Mammary epithelial cell (primary cell): ENCODE measurements at regions of chr12 and their contacts with region 1.

Region 1: DNA sequence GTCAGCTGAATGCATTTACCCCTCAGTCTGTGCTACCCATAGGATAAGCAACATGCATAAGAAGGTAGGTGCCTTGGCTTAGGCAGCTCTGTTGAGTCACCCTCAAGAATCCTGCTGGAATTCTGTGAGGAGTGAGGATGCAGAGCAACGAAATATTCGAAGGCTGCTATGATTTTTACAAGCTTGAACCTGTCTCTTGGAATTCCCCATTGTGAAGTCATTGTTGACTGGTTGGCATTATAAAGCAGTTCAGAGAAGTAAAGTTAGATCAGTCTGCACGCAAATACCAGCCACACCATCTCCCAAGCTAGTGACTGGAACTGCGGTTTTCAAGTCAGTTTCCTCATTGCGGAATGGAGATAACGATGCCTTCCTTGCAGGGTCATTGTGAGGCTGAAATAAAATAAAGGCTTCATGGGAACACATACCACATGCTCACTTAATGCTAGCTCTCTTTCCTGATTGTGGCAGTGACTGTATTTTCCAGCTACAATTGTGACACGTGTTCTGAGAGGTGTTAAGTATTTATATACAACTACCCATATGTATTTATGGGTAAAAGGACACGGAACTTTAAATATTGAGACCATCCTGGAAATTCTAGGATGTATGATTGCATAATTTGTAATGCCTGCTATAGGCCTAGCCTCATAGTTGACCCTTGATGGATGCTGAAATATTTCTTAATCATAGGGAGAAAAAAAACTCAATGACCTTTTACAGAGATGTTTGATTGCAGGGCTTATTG is 96.7 kb downstream of the ETV6 start:
- DNase-seq: peak; percentile 99
- H3K4me3 ChIP-seq: no peak overlapping the region
- H3K27ac ChIP-seq: peak overlapping the region; percentile 89
- H3K4me1 ChIP-seq: peaks cover 62% of the 10 kb centered on the region
- H3K27me3 ChIP-seq: no peaks in the 10 kb centered on the region
- CTCF ChIP-seq: no peak

Region 2: GRCh38 chr12:11595080-11595479 is 151.1 kb before region 1 on chr12:
- CTCF ChIA-PET with region 1: no interaction called
- dilution Hi-C with region 1: no loop called
- in situ Hi-C with region 1: no loop called
- intact Hi-C with region 1: no loop called
- DNase-seq: no peak
- H3K4me3 ChIP-seq: no peak overlapping the region
- H3K27ac ChIP-seq: no peak overlapping the region
- H3K4me1 ChIP-seq: no peaks in the 10 kb centered on the region
- H3K27me3 ChIP-seq: no peaks in the 10 kb centered on the region
- CTCF ChIP-seq: no peak

Region 3: DNA sequence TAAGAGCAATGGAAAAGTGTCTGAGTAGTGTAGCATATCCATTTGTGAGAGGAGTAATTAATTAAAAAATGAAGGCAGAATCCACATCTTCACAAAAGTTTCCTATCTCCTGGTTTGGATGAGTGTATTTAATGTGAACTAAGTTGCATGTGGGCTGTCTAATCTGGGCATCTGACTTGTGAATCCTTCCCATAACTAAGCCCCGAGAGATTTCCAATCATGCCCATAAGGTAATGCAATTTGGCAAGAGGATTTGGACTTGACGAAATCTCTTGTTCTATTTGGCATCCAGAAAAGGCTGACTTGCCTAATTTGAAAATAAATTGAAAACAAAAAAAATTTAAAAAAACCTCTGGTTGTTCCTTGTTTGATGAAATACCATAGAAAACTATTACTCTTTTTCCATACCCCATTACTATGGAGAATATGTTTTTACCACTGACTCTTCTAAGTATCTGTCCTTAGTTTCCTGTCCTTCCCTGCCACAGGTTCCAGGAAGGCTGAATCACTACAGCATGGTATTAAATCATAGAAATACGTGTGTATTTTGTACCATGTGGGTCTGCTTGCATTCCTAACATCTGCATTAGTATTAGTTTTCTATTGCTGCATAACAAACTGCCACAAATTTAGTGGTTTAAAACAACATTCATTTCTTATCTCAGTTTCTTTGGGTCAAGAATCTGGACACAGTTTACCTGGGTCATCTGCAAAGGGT is 48.4 kb before region 1 on chr12:
- CTCF ChIA-PET with region 1: no interaction called
- dilution Hi-C with region 1: no loop called
- in situ Hi-C with region 1: no loop called
- intact Hi-C with region 1: loop called (anchors 1 kb)
- DNase-seq: peak; percentile 75
- H3K4me3 ChIP-seq: no peak overlapping the region
- H3K27ac ChIP-seq: peak overlapping the region; percentile 55
- H3K4me1 ChIP-seq: peaks cover 19% of the 10 kb centered on the region
- H3K27me3 ChIP-seq: no peaks in the 10 kb centered on the region
- CTCF ChIP-seq: no peak

Region 4: GRCh38 chr12:11785712-11786111 is 39.5 kb after region 1 on chr12:
- CTCF ChIA-PET with region 1: no interaction called
- dilution Hi-C with region 1: no loop called
- in situ Hi-C with region 1: no loop called
- intact Hi-C with region 1: loop called (anchors 5 kb)
- DNase-seq: peak; percentile 87
- H3K4me3 ChIP-seq: no peak overlapping the region
- H3K27ac ChIP-seq: no peak overlapping the region
- H3K4me1 ChIP-seq: peaks cover 13% of the 10 kb centered on the region
- H3K27me3 ChIP-seq: no peaks in the 10 kb centered on the region
- CTCF ChIP-seq: no peak

Region 5: GRCh38 chr12:11798856-11799501 is 52.8 kb after region 1 on chr12:
- CTCF ChIA-PET with region 1: no interaction called
- dilution Hi-C with region 1: no loop called
- in situ Hi-C with region 1: no loop called
- intact Hi-C with region 1: loop called (anchors 2 kb)
- DNase-seq: peak; percentile 92
- H3K4me3 ChIP-seq: no peak overlapping the region
- H3K27ac ChIP-seq: peak overlapping the region; percentile 75
- H3K4me1 ChIP-seq: peaks cover 60% of the 10 kb centered on the region
- H3K27me3 ChIP-seq: no peaks in the 10 kb centered on the region
- CTCF ChIP-seq: no peak

Region 6: GRCh38 chr12:11877869-11878780 is 131.9 kb after region 1 on chr12:
- CTCF ChIA-PET with region 1: no interaction called
- dilution Hi-C with region 1: no loop called
- in situ Hi-C with region 1: no loop called
- intact Hi-C with region 1: loop called (anchors 5 kb)
- DNase-seq: peak; percentile 92
- H3K4me3 ChIP-seq: peak overlapping the region in 1 of 3 experiments; percentile 7
- H3K27ac ChIP-seq: peak overlapping the region; percentile 80
- H3K4me1 ChIP-seq: peaks cover 55% of the 10 kb centered on the region
- H3K27me3 ChIP-seq: no peaks in the 10 kb centered on the region
- CTCF ChIP-seq: no peak

Region 7: GRCh38 chr12:11941606-11942337 is 195.6 kb after region 1 on chr12:
- CTCF ChIA-PET with region 1: no interaction called
- dilution Hi-C with region 1: no loop called
- in situ Hi-C with region 1: no loop called
- intact Hi-C with region 1: loop called (anchors 1 kb)
- DNase-seq: peak; percentile 89
- H3K4me3 ChIP-seq: no peak overlapping the region
- H3K27ac ChIP-seq: peak overlapping the region; percentile 84
- H3K4me1 ChIP-seq: peaks cover 14% of the 10 kb centered on the region
- H3K27me3 ChIP-seq: no peaks in the 10 kb centered on the region
- CTCF ChIP-seq: no peak